Activated B cell treated with CpG ODN at 0.5 μM for 24 hours (primary cell): ENCODE measurements at regions of chr5 and their contacts with region 1.

Region 1: DNA sequence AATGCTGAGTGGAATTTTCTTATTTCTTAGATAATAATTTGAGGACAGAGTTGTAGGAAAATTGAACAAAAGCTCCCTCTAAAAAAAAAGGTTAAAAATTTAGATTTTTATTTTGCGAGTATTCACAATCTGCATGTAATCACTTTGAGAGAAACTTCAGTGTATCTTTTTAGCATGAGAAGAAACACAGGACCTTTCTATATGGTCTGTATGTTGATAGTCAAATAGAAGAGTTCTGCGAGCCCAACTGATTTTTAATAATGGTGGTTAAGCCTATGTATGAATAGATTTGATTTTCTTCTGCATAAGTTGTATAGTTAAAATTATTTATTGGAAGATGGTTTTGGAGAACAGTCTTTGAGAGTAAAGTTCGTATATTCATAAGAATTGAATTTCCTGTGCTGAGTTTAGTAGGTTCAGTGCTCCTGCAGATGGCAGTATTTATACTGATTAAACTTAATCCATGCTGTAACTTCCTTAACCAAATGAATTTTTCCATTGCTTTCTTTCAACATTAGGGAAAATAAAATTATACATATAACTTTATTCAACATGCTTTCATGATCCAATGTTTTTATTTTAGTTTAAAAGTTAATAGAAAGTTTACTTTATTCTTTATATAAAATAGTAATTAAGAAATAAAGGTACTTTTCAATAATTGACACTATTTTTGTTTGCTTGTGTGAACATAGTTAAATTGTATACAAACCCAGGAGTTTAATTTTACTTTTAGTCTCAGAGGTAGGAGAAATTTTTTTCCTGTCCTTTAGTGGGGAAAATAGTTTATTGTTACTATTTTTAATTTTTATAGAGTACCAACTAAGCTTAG is 19.6 kb downstream of the TCERG1 start:
- DNase-seq: no peak
- ATAC-seq: no peak
- H3K4me3 Mint-ChIP-seq: no peak overlapping the region
- H3K27ac Mint-ChIP-seq: no peak overlapping the region
- H3K4me1 Mint-ChIP-seq: peaks cover 3% of the 10 kb centered on the region
- H3K27me3 Mint-ChIP-seq: no peaks in the 10 kb centered on the region
- CTCF ChIP-seq: no peak

Region 2: GRCh38 chr5:146165460-146165859 is 301.3 kb before region 1 on chr5:
- CTCF ChIA-PET with region 1: no interaction called
- POLR2A ChIA-PET with region 1: no interaction called
- intact Hi-C with region 1: loop called (anchors 10 kb)
- DNase-seq: no peak
- ATAC-seq: no peak
- H3K4me3 Mint-ChIP-seq: no peak overlapping the region
- H3K27ac Mint-ChIP-seq: no peak overlapping the region
- H3K4me1 Mint-ChIP-seq: no peaks in the 10 kb centered on the region
- H3K27me3 Mint-ChIP-seq: no peaks in the 10 kb centered on the region
- CTCF ChIP-seq: no peak